Posterior vena cava (tissue), 2 donors: ENCODE measurements at regions of chr16 and their contacts with region 1.

Region 1: GRCh38 chr16:86865524-86866301 is 287.4 kb downstream of the FOXL1 start:
- DNase-seq: peak; percentile 88

Region 2: GRCh38 chr16:86010680-86011141 is 855.0 kb before region 1 on chr16:
- intact Hi-C with region 1: loop called in 1 of 2 experiments (anchors 5 kb)
- DNase-seq: peak; percentile 67

Region 3: DNA sequence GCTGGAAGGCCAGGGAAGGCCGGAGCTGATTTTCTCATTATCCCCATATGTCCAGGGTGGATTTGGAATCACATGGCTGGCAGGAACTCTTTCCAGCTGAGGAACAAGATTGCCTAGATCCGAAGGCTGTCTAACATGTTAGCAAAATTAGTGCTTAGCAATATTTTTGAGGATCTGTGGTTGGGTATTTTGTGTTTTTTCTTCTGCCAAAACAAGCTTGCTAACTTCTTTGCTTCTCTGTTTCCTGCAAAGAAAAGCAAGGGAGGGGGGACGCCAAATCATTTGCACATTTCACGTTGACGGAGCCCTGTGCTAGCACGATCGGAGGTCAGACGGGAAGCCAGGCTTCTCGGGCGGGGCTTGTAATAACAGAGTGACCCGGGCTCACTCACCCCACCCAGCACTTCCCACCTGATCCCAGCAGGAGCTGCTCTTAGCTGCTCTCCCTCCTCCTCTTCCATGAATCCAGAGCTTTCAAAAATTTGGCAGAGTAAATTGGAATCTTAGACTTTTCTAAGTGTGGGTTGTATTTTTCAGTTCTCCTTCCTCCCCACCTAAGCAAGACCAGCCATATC is 388.7 kb before region 1 on chr16:
- intact Hi-C with region 1: no loop called
- DNase-seq: no peak

Region 4: DNA sequence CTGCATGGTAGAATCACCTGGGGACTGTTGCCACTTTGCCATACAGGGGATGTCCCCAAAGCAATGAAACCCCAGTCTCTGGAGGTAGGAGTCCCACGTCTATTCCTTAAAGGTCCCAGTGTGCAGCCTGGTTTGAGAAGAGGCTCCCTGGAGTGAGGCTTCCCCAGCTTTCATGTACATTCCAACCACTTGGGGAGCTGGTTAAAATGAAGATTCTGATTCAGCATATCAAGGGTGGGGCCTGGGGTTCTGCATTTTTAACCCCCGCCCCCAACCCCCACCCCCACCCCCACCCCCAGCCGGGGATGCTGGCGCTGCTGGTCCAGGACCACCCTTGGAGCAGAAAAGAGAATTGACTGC is 46.2 kb before region 1 on chr16:
- intact Hi-C with region 1: no loop called
- DNase-seq: no peak

Region 5: DNA sequence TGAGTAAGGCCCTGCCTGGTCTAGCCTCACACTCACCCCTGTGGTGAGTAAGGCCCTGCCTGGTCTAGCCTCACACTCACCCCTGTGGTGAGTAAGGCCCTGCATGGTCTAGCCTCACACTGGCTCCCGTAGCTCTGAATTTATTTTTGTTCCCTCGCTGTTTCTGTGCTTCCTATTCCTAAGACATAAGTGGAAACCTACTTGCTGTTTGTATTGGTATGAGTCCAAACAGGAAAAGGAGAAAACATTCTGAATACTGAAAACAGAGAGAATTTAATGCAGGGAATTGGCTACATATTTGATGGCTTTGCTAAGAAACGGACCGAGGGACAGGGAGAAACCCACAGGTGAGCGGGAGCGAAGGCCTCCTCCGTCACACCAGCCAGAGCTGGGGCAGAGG is 19.6 kb before region 1 on chr16:
- intact Hi-C with region 1: loop called in 1 of 2 experiments (anchors 1 kb)
- DNase-seq: no peak

Region 6: GRCh38 chr16:87076950-87077749 is 211.4 kb after region 1 on chr16:
- intact Hi-C with region 1: no loop called
- DNase-seq: no peak

Region 7: DNA sequence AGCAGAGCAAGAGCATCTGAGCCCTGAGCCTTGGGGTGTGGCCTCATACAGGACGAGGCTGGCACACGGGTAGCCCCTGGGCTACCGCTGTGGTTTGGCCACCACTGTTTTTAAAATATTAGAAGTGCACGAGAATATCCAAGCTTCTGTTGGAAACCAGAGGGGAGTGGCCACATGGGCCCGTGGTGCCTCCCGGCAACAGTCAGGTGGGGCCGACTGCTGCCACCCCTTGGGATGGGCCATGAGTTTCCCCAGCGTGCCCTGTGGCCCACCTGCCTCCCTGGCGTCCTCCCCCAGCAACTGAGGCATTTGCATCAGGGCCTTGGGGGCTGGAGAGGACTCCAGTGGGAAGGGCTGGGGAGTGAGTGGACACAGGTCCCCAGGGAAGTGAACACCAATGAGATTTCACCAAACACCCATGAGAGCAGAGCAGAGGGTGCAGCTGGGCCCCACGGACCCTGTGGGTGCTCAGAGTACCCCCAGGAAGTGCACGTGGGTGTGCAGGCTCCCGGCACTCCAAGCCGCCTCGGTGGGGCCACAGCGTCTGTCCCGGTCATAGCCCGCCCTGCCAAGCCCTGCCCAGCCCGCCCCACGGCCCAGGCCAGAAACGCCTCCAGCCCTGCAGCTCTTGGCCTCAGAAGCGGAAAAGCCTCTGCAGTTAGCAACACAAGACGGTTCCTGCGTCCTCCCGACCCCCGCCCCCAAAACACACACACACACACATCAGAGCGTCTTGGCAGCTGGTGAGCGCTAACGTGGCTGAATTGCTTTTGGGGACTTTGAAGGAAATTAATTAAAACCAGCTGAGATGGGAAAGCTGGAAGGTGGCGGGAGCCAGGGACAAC is 1539.7 kb after region 1 on chr16:
- intact Hi-C with region 1: no loop called
- DNase-seq: no peak